Ovary (tissue), 10 donors: ENCODE measurements at regions of chr10 and their contacts with region 1.

Region 1: GRCh38 chr10:99470327-99470726 is 39.9 kb upstream of the GOT1 start:
- DNase-seq: no peak
- H3K4me3 ChIP-seq: no peak overlapping the region
- H3K27ac ChIP-seq: no peak overlapping the region
- H3K4me1 ChIP-seq: peaks cover 4% of the 10 kb centered on the region
- H3K27me3 ChIP-seq: no peaks in the 10 kb centered on the region
- CTCF ChIP-seq: no peak
- EP300 ChIP-seq: no peak
- POLR2A ChIP-seq: no peak

Region 2: DNA sequence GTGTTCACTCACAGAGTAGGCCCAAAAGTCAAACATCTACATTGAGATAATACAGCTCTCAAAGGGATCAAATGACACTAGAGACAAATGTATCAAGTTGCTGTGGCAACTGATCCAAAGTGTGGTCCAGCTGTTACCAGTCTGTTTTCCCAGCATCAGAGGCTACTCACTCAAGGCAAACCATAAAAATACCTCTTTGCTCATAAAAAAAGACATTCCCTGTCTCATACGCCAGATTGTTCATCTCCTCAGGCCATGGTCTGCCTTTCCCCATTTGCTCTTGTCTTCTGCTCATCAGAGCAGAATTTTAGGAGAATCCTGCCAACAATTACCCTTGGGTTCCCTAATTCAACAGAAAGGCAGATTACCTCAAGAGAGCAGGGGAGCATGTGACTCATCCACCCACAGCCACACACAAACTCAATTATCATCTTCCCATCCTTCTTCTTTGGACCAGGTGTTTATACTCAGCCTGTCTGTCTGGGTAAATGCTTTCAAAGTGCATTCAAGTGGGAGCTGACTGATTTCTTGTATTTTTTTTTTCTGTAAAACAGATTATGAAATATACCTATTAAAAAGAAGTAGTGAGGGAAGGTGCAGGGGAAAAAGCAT is 797.0 kb before region 1 on chr10:
- intact Hi-C with region 1: loop called in 1 of 4 experiments (anchors 10 kb)
- DNase-seq: no peak
- H3K4me3 ChIP-seq: no peak overlapping the region
- H3K27ac ChIP-seq: no peak overlapping the region
- H3K4me1 ChIP-seq: no peaks in the 10 kb centered on the region
- H3K27me3 ChIP-seq: no peaks in the 10 kb centered on the region
- CTCF ChIP-seq: no peak
- EP300 ChIP-seq: no peak
- POLR2A ChIP-seq: no peak